ENCODE measurements at regions of chr5 and their contacts with region 1.

Region 1: DNA sequence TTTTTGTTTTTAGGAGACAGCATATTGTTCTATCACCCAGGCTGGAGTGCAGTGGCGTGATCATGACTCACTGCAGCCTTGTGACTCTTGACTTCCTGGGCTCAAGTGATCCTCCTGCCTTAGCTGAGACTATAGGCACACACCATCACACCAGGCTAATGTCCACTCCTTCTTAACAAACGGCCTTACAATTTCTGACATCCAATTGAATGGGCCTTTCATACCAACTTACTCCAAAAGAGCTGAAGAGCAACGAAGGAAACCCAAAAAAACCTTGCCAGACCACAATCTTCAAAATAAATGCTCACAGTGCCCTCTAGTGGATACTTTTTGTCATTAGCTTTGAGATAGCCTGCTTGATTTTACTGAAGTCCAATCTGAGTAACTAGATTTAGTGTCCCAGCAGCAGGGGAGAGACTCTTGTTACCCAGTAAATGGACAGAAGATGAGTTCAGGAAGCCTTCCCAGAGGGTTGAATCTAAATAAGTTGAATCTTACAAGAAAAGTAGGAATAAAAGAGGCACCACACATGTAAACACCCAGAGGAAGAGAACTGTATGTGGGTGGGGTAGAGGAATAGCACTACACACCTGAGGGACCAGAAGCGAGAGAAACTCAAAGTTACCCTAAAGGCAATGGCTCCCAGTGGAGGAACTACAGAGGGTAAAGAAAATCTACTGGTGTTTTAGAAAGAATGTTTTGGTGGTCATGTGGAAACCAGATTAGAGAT is 9.3 kb downstream of the ZNF622 start:
- DNase-seq: peak; percentile 61
- H3K4me3 Mint-ChIP-seq: peak overlapping the region; percentile 46
- H3K27ac Mint-ChIP-seq: peak overlapping the region; percentile 91
- H3K4me1 Mint-ChIP-seq: peaks cover 51% of the 10 kb centered on the region
- H3K27me3 Mint-ChIP-seq: no peaks in the 10 kb centered on the region

Region 2: GRCh38 chr5:16160706-16161105 is 295.6 kb before region 1 on chr5:
- CTCF ChIA-PET with region 1: interaction called, 26 read pairs
- intact Hi-C with region 1: loop called (anchors 1 kb)
- DNase-seq: peak; percentile 45
- H3K4me3 Mint-ChIP-seq: no peak overlapping the region
- H3K27ac Mint-ChIP-seq: no peak overlapping the region
- H3K4me1 Mint-ChIP-seq: no peaks in the 10 kb centered on the region
- H3K27me3 Mint-ChIP-seq: peaks cover 2% of the 10 kb centered on the region